ENCODE measurements at regions of chr5 and their contacts with region 1.

Region 1: DNA sequence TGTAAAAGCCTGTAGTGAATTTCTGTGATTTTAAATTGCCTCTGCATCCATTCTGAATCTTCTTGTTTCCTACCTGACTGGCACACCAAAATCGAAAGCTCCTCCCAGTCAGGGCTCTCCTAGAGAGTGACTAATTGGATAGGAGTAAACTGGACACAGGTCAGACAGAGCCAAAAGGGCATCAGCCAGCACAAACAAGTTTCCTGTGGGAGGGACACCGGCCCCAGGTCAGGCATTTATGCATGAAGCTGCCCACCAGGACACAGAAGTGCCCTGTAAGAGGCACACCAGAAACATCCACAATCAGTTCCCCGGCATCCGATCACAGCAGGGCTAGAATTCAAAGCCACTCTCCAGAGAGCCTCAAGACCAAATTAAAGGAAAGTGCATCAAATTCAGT is 78.4 kb downstream of the SFXN1 start:
- DNase-seq: no peak
- ATAC-seq: no peak
- H3K4me3 ChIP-seq: no peak overlapping the region
- H3K27ac ChIP-seq: no peak overlapping the region
- H3K4me1 ChIP-seq: no peaks in the 10 kb centered on the region
- H3K27me3 ChIP-seq: peaks cover 4% of the 10 kb centered on the region
- CTCF ChIP-seq: no peak

Region 2: DNA sequence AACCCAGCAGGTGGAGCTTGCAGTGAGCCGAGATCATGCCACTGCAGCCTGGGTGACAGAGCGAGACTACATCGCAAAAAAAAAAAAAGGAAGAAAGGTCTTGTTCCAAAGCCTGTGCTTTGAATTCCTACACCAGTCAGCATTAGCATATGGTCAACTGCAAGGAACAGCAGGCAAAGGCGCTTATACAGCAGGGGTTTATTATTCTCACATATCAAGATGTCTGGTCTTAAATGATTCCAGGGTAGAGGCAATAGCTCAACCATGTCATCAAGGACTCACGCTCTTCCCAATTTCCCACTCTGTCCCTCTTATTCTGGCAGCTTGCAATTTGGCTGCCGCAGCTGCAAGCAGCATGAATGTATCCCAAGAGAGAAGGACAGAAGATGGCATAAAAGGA is 72.5 kb after region 1 on chr5:
- CTCF ChIA-PET with region 1: no interaction called
- POLR2A ChIA-PET with region 1: interaction called, 12 read pairs
- in situ Hi-C with region 1: no loop called
- intact Hi-C with region 1: no loop called
- DNase-seq: no peak
- ATAC-seq: no peak
- H3K4me3 ChIP-seq: no peak overlapping the region
- H3K27ac ChIP-seq: no peak overlapping the region
- H3K4me1 ChIP-seq: no peaks in the 10 kb centered on the region
- H3K27me3 ChIP-seq: no peaks in the 10 kb centered on the region; the same call in none of the 2 replicates
- CTCF ChIP-seq: no peak

Region 3: DNA sequence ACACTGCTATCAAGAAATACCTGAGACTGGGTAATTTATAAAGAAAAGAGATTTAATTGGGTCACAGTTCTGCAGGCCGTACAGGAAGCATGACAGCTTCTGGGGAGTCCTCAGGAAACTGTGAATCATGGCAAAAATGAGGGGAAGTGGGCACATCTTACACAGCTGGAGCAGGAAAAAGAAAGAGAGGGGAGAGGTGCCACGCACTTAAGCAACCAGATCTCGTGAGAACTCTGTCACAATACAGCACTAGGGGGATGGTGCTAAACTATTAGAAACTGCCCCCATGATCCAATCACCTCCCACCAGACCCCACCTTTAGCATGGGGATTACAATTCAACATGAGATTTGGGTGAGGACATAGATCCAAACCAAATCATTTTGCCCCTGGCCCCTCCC is 209.1 kb after region 1 on chr5:
- CTCF ChIA-PET with region 1: interaction called, 11 read pairs
- POLR2A ChIA-PET with region 1: no interaction called
- in situ Hi-C with region 1: no loop called
- intact Hi-C with region 1: no loop called
- DNase-seq: no peak
- ATAC-seq: no peak
- H3K4me3 ChIP-seq: no peak overlapping the region
- H3K27ac ChIP-seq: no peak overlapping the region
- H3K4me1 ChIP-seq: no peaks in the 10 kb centered on the region
- H3K27me3 ChIP-seq: peaks cover 3% of the 10 kb centered on the region; the same call in 1 of the 2 replicates
- CTCF ChIP-seq: no peak

Measured in Panc1 (cell line).